Naive thymus-derived CD4-positive, alpha-beta T cell (primary cell): ENCODE measurements at regions of chr12 and their contacts with region 1.

Region 1: DNA sequence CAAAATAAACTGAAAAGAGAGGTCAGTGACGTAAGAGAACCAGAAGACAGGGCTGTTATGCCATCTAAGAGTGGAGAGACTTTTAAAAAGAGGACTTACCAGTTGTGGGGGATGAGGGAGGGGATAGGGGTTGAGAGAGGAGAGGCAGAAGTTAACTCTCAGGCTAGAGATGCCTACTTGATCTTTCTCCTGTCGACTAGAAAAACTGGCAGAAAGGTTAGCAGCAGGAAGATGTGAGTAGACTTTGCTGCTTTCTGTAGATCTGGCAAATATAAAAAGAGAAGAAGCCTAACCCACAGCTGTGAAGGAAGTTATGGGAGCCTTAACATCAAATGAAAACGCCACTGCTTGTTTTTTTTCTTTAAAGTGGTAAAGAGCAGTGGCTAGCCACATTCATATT is 10.7 kb downstream of the CREBL2 start:
- DNase-seq: peak in 7 of 9 donors; percentile 44 to 76 (median 65)
- ATAC-seq: peak; percentile 87
- H3K4me3 ChIP-seq: peak overlapping the region; percentile 29
- H3K4me3 Mint-ChIP-seq: peak overlapping the region; percentile 1 to 79 (median 62)
- H3K27ac ChIP-seq: peak overlapping the region; percentile 72
- H3K27ac Mint-ChIP-seq: peak overlapping the region; percentile 70 to 95 (median 86)
- H3K4me1 ChIP-seq: peaks cover 27 to 40% of the 10 kb centered on the region in 2 donors
- H3K4me1 Mint-ChIP-seq: peaks cover 34 to 91% (median 83%) of the 10 kb centered on the region in 7 donors
- H3K27me3 ChIP-seq: no peaks in the 10 kb centered on the region
- H3K27me3 Mint-ChIP-seq: no peaks in the 10 kb centered on the region

Region 2: DNA sequence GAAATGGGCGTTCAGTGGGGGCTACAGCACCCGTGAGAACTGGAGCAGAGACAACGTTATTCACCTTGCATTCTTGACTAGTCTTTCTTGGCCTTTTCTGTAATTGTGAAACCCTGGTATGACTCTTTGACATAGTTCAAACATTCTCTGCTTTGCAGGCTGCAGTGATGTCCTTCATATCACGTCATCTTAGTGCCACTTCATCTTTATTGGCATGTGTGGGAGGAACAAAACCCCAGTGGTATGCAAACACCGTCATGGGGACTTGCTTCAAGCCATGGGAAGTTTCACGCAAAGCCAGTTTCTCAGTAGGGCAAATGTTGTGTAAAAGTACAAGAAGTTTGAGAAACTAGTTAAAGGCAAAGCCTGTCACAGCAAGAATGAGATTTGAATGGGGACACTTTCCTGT is 39.5 kb before region 1 on chr12:
- CTCF ChIA-PET with region 1: no interaction called
- POLR2A ChIA-PET with region 1: no interaction called
- intact Hi-C with region 1: loop called in 1 of 2 experiments (anchors 5 kb)
- DNase-seq: peak in 1 of 9 donors; percentile 61
- ATAC-seq: peak; percentile 31
- H3K4me3 ChIP-seq: no peak overlapping the region
- H3K4me3 Mint-ChIP-seq: peak overlapping the region in 1 of 10 donors; percentile 43
- H3K27ac ChIP-seq: no peak overlapping the region
- H3K27ac Mint-ChIP-seq: peak overlapping the region in 1 of 9 donors; percentile 67
- H3K4me1 ChIP-seq: peaks cover 0 to 6% of the 10 kb centered on the region in 2 donors
- H3K4me1 Mint-ChIP-seq: peaks cover 0 to 24% (median 10%) of the 10 kb centered on the region in 7 donors
- H3K27me3 ChIP-seq: no peaks in the 10 kb centered on the region
- H3K27me3 Mint-ChIP-seq: peaks cover 0 to 4% (median 0%) of the 10 kb centered on the region in 5 donors

Region 3: DNA sequence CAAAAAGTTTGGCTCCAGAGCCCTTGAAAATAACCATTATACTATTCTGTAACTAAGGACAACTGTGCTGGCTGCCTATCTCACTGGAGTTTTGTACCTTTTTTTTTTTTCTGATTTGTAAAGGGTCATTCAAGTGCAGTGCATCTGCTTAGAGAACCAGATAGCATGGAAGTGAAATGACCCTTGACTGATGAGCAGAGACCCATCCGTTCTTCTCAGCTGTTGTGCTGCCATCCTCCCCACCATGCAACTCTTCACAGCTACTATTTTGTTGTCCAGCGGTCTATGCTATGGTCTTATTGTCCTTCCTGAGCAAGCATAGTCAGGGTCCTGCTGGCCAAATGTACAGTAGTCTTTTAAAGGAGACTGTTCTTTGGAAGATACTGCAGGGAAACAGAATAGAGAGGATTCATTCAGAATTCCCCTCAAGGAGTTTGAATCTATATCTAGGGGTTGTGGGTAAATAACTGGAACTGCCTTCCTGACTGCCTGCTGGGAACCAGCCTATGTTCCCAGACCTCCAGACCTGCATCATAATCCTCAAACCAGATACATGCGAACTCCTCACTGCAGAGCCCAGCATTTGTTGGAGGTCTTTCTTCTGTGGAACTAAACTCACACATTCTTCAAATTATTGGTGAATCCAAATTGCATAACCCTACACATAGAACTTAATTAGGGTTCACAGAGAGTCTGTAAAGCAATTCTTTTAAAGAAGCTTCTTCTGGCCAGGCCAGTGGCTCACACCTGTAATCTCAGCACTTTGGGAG is 32.5 kb after region 1 on chr12:
- CTCF ChIA-PET with region 1: no interaction called
- POLR2A ChIA-PET with region 1: no interaction called
- intact Hi-C with region 1: loop called in 1 of 2 experiments (anchors 5 kb)
- DNase-seq: no peak
- ATAC-seq: no peak
- H3K4me3 ChIP-seq: no peak overlapping the region
- H3K4me3 Mint-ChIP-seq: no peak overlapping the region
- H3K27ac ChIP-seq: no peak overlapping the region
- H3K27ac Mint-ChIP-seq: peak overlapping the region in 2 of 9 donors; percentile 10 to 53
- H3K4me1 ChIP-seq: no peaks in the 10 kb centered on the region
- H3K4me1 Mint-ChIP-seq: peaks cover 0 to 19% (median 13%) of the 10 kb centered on the region in 7 donors
- H3K27me3 ChIP-seq: no peaks in the 10 kb centered on the region
- H3K27me3 Mint-ChIP-seq: no peaks in the 10 kb centered on the region